Astrocyte of the cerebellum (primary cell): ENCODE measurements at regions of chr14 and their contacts with region 1.

Region 1: DNA sequence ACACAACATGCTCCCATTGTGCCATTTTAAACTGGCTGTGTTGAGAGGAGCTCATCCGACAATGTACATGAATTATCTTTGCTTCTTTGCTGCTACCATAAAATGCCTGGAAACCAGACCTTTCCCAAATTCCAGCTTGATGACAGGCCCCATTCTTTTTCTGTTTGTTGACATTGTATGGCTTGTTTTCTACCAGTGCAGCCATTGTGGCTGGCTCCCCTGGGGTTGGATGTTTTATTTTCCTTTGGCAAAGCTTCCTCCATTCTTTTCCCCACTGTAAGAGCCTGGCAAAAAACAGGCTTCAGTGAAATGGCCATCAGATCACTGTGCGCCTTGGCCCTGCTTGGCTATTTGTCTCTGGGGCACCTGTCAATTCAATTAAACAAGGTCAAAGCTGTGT is 532.5 kb downstream of the VRK1 start:
- DNase-seq: peak; percentile 69
- H3K4me3 ChIP-seq: no peak overlapping the region
- CTCF ChIP-seq: no peak

Region 2: GRCh38 chr14:97248973-97249372 is 80.7 kb before region 1 on chr14:
- in situ Hi-C with region 1: loop called (anchors 5 kb)
- DNase-seq: no peak
- H3K4me3 ChIP-seq: no peak overlapping the region
- CTCF ChIP-seq: no peak

Region 3: GRCh38 chr14:97266653-97267052 is 63.0 kb before region 1 on chr14:
- in situ Hi-C with region 1: no loop called
- DNase-seq: peak; percentile 67
- H3K4me3 ChIP-seq: no peak overlapping the region
- CTCF ChIP-seq: no peak

Region 4: GRCh38 chr14:97411938-97412612 is 82.4 kb after region 1 on chr14:
- in situ Hi-C with region 1: no loop called
- DNase-seq: no peak
- H3K4me3 ChIP-seq: no peak overlapping the region
- CTCF ChIP-seq: no peak